Posterior cingulate gyrus (tissue), 11 donors: ENCODE measurements at regions of chr12 and their contacts with region 1.

Region 1: GRCh38 chr12:25130741-25131188 is 64.2 kb downstream of the DNAI7 start:
- DNase-seq: no peak

Region 2: GRCh38 chr12:24852420-24852819 is 278.3 kb before region 1 on chr12:
- intact Hi-C with region 1: loop called (anchors 5 kb)
- DNase-seq: no peak

Region 3: DNA sequence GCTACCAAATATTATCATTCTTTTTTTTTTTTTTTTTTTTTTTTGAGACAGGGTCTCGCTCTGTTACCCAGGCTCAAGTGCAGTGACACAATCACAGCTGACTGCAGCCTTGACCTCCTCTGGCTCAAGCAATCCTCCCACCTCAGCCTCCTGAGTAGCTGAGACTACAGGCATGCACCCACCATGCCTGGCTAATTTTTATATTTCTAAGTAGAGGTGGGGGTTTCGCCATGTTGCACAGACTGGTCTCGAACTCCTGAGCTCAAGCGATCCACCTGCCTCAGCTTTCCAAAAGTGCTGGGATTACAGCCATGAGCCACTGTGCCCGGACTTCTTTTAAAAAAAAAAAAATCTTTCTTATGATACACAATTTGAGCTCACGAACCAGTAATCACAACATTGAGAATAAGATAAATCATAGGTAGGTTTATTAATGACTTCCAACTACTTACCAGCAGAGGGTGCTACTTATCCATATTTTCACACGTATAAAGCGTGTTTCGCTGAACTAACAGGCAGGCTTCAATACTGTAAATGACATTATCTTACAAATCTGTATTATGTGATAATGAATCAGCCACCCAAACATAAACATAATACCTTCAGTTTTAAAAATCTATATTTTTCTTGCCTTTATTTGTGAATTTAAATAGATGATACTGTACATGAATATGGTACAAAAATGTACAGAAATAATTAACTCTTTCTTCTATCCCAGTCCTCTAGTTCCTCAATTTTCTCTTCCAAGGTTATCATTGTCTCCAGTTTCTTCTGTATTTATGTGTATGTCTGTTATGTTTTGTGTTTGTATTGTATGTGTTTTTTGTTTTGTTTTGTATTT is 139.3 kb before region 1 on chr12:
- intact Hi-C with region 1: loop called (anchors 1 kb)
- DNase-seq: no peak

Region 4: GRCh38 chr12:25320123-25321006 is 189.6 kb after region 1 on chr12:
- intact Hi-C with region 1: no loop called
- DNase-seq: no peak